HCT116 (cell line): ENCODE measurements at regions of chr10 and their contacts with region 1.

Region 1: DNA sequence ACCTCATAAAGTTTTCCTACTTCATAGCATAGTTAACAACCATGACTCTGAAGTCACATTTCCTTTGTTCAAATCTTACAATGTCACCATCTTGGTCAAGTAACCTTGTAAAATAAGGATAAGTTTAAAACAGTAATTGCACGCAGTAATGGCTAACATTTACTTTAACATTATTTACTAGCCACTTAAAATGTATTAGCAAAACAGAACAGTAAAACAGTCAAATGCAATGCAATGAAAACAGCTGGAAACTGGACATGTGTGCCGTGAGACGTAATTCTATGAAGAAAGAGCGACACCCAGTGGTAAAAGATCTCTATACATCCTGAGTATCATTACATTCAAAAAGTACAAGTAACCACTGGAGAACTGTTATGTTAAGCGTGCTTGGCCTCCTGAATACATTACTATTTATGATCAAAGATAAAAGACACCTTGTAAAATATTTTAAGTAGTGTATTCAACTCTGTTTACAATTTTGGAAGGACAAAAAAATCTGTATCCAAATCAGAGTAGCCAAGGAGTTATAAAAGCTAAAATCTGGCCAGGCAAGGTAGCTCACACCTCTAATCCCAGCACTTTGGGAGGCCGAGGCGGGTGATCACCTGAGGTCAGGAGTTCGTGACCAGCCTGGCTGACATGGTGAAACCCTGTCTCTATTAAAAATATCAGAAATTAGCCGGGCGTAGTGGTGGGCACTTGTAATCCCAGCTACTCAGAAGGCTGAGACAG is 27.2 kb downstream of the ATE1 start:
- DNase-seq: peak; percentile 52
- ATAC-seq: peak; percentile 96
- H3K4me3 ChIP-seq: no peak overlapping the region
- H3K27ac ChIP-seq: no peak overlapping the region
- H3K4me1 ChIP-seq: no peaks in the 10 kb centered on the region
- H3K27me3 ChIP-seq: no peaks in the 10 kb centered on the region
- CTCF ChIP-seq: peak; percentile 70 to 97 (median 71); a peak in 5 of 6 replicates
- POLR2A ChIP-seq: no peak
- RAD21 ChIP-seq: peak; percentile 83

Region 2: DNA sequence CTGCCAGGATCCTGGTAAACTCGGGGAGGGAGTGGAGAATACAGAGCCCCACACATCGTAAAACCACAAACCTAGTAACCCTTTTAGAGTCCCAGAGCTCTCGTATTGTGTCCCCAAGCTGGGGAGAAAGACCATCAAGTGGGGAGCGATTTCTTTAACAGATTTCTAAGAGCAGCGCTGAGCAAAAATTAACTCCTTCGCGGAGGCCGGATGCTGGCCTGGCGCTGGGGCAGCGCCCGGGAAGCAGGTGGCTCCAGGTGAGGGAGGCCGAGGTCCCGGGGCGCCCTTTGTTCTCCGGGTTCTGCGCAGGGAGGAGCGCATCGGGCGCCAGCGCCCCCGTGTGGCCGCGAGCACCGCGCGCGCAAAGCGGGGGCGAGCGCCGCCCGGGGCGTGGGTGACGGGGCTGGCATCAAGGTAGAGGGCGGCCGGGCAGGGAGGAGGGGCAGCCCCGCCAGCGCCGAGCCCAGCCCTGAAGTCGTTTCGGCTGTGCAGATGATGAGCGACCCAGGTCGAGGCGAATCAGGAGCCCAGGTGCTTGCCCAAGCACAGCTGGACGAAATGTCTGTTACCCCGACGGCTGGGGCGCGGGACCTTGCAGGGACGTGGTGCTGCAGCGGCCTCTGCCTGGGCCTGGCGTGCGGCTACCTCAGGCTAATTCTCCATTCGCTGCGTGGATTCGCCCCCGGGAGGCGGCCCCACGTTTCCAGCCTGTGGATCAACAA is 292.0 kb before region 1 on chr10:
- CTCF ChIA-PET with region 1: interaction called, 3 read pairs
- POLR2A ChIA-PET with region 1: no interaction called
- RAD21 ChIA-PET with region 1: no interaction called
- intact Hi-C with region 1: loop called (anchors 10 kb)
- DNase-seq: peak; percentile 43
- ATAC-seq: peak; percentile 95
- H3K4me3 ChIP-seq: peak overlapping the region; percentile 17 to 18
- H3K27ac ChIP-seq: no peak overlapping the region; the same call in 1 of the 2 replicates
- H3K4me1 ChIP-seq: peaks cover 7 to 17% of the 10 kb centered on the region in 2 experiments; a peak in 3 of 4 replicates
- H3K27me3 ChIP-seq: no peaks in the 10 kb centered on the region
- CTCF ChIP-seq: peak; percentile 90 to 98 (median 93)
- POLR2A ChIP-seq: no peak
- RAD21 ChIP-seq: peak; percentile 91

Region 3: GRCh38 chr10:121886997-121887622 is 13.5 kb before region 1 on chr10:
- CTCF ChIA-PET with region 1: interaction called, 24 read pairs
- POLR2A ChIA-PET with region 1: no interaction called
- RAD21 ChIA-PET with region 1: no interaction called
- intact Hi-C with region 1: no loop called
- DNase-seq: peak; percentile 60
- ATAC-seq: peak; percentile 96
- H3K4me3 ChIP-seq: no peak overlapping the region
- H3K27ac ChIP-seq: no peak overlapping the region
- H3K4me1 ChIP-seq: no peaks in the 10 kb centered on the region
- H3K27me3 ChIP-seq: no peaks in the 10 kb centered on the region
- CTCF ChIP-seq: peak; percentile 80 to 98 (median 92)
- POLR2A ChIP-seq: no peak
- RAD21 ChIP-seq: peak; percentile 88